Gastrocnemius medialis (tissue), 4 donors: ENCODE measurements at regions of chr2 and their contacts with region 1.

Region 1: DNA sequence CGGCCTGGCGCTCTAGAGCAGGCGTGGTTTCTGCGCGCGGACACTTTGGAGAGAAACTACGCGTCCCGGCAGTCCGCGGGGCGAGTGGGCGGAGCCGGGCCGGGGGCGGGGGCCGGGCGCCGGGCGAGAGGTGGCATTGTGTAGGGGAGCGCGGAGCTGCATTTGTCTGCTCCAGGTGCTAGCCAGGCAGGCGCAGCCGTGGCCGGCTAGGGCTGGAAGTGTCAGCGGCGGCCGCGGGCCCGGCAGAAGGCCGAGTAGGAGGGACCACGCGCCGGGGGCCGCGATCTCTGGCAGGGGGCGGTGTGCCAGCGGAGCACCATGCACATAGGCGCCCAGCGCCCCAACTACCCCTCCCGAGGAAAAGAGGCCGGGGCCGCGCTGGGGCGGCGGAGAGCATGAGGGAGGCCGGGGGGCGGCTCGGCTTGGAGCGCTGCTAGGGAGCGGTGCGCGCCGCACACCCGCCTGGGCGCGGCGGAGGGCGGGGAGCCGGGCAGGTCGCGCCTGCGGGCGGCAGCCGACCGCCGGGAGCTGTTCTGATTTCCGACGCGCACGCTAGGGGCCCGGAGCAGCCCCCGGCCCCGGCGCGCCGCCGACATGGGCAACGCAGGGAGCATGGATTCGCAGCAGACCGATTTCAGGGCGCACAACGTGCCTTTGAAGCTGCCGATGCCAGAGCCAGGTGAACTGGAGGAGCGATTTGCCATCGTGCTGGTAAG is at the start of gene FMNL2:
- DNase-seq: peak; percentile 84 to 86
- ATAC-seq: peak; percentile 85 to 86
- H3K4me3 ChIP-seq: peak within 1 kb of the TSS; percentile 67 to 96 (median 86)
- H3K27ac ChIP-seq: peak within 1 kb of the TSS; percentile 80 to 97 (median 96)
- H3K4me1 ChIP-seq: peaks cover 25 to 42% of the 10 kb centered on the region in 2 donors
- H3K27me3 ChIP-seq: no peaks in the 10 kb centered on the region
- CTCF ChIP-seq: peak in 2 of 5 experiments; percentile 4 to 13
- POLR2A ChIP-seq: peak; percentile 86 to 95
- total RNA-seq, gene FMNL2: 6.7 to 17.2 (median 11.5) TPM

Region 2: GRCh38 chr2:152175458-152176325 is 159.5 kb before region 1 on chr2 and contains the start of gene STAM2:
- in situ Hi-C with region 1: no loop called
- intact Hi-C with region 1: loop called (anchors 5 kb)
- DNase-seq: peak; percentile 84 to 90
- ATAC-seq: peak; percentile 95 to 96
- H3K4me3 ChIP-seq: peak within 1 kb of the TSS; percentile 70 to 95 (median 80)
- H3K27ac ChIP-seq: peak within 1 kb of the TSS; percentile 87 to 97 (median 92)
- H3K4me1 ChIP-seq: peaks cover 25 to 29% of the 10 kb centered on the region in 2 donors
- H3K27me3 ChIP-seq: no peaks in the 10 kb centered on the region
- CTCF ChIP-seq: peak; percentile 93 to 98 (median 96)
- POLR2A ChIP-seq: peak; percentile 74 to 78
- total RNA-seq, gene STAM2: 16.7 to 31.8 (median 20.3) TPM

Region 3: GRCh38 chr2:152376385-152376784 is 41.2 kb after region 1 on chr2:
- in situ Hi-C with region 1: no loop called
- intact Hi-C with region 1: loop called (anchors 5 kb)
- DNase-seq: no peak
- ATAC-seq: no peak
- H3K4me3 ChIP-seq: no peak overlapping the region
- H3K27ac ChIP-seq: no peak overlapping the region
- H3K4me1 ChIP-seq: peaks cover 57 to 80% of the 10 kb centered on the region in 2 donors
- H3K27me3 ChIP-seq: no peaks in the 10 kb centered on the region
- CTCF ChIP-seq: no peak
- POLR2A ChIP-seq: no peak

Region 4: GRCh38 chr2:152418688-152419087 is 83.5 kb after region 1 on chr2:
- in situ Hi-C with region 1: loop called in 1 of 4 experiments (anchors 10 kb)
- intact Hi-C with region 1: no loop called
- DNase-seq: peak; percentile 42 to 46
- ATAC-seq: peak; percentile 77 to 78
- H3K4me3 ChIP-seq: no peak overlapping the region
- H3K27ac ChIP-seq: peak overlapping the region; percentile 4 to 78 (median 32)
- H3K4me1 ChIP-seq: peaks cover 55 to 65% of the 10 kb centered on the region in 2 donors
- H3K27me3 ChIP-seq: no peaks in the 10 kb centered on the region
- CTCF ChIP-seq: no peak
- POLR2A ChIP-seq: no peak

Region 5: DNA sequence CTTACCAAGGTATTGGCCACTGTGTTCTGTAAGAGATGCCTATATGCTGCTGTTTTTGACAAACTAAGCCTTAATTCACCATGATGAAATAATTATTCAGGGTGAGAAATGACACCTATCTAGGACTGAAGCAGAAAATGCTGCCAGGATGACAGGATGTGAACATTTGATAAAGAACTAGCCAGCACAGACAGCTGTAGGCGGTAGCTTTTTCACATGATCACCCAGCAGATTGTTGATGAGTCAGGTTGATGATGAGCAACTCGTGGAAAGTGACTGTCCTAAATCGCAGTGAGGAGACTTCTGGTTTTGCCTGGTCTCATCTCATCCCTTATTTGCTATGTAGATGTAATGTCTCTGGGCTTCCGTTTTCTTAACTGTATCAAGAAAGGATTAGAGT is 238.0 kb after region 1 on chr2:
- in situ Hi-C with region 1: loop called in 2 of 4 experiments (anchors 25 kb)
- intact Hi-C with region 1: loop called (anchors 1 kb)
- DNase-seq: peak; percentile 69 to 75
- ATAC-seq: peak; percentile 91
- H3K4me3 ChIP-seq: no peak overlapping the region
- H3K27ac ChIP-seq: peak overlapping the region in 3 of 4 donors; percentile 12 to 80 (median 61)
- H3K4me1 ChIP-seq: peaks cover 31 to 34% of the 10 kb centered on the region in 2 donors
- H3K27me3 ChIP-seq: no peaks in the 10 kb centered on the region
- CTCF ChIP-seq: no peak
- POLR2A ChIP-seq: peak; percentile 16 to 36

Region 6: GRCh38 chr2:152635635-152636298 is 300.6 kb after region 1 on chr2:
- in situ Hi-C with region 1: loop called in 2 of 4 experiments (anchors 5 to 10 kb)
- intact Hi-C with region 1: no loop called
- DNase-seq: peak in 1 of 2 donors; percentile 30
- ATAC-seq: peak in 1 of 2 donors; percentile 53
- H3K4me3 ChIP-seq: no peak overlapping the region
- H3K27ac ChIP-seq: no peak overlapping the region
- H3K4me1 ChIP-seq: no peaks in the 10 kb centered on the region
- H3K27me3 ChIP-seq: no peaks in the 10 kb centered on the region
- CTCF ChIP-seq: peak; percentile 77 to 89 (median 87)
- POLR2A ChIP-seq: no peak

Region 7: GRCh38 chr2:152664703-152665102 is 329.5 kb after region 1 on chr2:
- in situ Hi-C with region 1: no loop called
- intact Hi-C with region 1: no loop called
- DNase-seq: no peak
- ATAC-seq: no peak
- H3K4me3 ChIP-seq: no peak overlapping the region
- H3K27ac ChIP-seq: no peak overlapping the region
- H3K4me1 ChIP-seq: no peaks in the 10 kb centered on the region
- H3K27me3 ChIP-seq: no peaks in the 10 kb centered on the region
- CTCF ChIP-seq: no peak
- POLR2A ChIP-seq: no peak